Sciatic nerve (tissue), 2 donors: ENCODE measurements at regions of chr3 and their contacts with region 1.

Region 1: DNA sequence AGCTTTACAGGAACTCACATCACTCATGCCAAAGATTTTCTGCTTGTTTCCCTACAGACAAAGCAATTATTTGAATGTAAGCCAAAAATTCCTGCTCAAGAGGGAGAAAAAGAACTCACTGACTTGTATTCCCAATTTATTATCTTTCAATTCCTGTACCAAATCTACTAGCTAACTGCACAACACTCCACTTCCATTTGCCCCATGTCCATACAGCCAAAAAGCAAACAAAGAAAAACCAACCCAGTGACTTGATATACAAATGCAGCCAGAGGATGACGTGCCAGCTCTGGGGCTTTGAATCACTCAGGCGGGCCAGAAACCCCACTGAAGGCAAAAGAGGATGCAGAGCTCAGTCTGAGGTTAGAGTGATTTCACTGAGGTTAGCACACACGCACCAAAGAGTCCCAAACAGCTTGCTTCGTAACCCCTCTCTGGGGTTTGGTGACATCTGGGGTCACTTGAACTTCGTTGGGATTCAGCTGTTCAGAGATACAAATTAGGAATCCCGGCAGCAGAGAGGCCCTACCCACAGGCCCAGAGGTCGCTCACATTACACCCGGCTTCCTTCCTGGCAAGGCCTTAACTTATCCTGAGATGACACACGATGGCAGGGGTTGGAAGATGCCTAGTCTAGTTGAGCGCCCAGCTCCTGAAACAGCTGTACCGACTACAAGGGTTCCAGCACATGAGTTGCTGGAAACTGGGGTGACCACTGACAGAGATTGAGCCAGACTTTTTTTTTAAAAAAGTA is 1.6 kb downstream of the RFTN1 start:
- DNase-seq: peak; percentile 76
- ATAC-seq: peak; percentile 71

Region 2: GRCh38 chr3:15332405-15333098 is 1179.3 kb before region 1 on chr3 and contains the start of gene SH3BP5:
- intact Hi-C with region 1: no loop called
- DNase-seq: peak; percentile 90
- ATAC-seq: peak; percentile 79
- total RNA-seq, gene SH3BP5: 143 TPM

Region 3: DNA sequence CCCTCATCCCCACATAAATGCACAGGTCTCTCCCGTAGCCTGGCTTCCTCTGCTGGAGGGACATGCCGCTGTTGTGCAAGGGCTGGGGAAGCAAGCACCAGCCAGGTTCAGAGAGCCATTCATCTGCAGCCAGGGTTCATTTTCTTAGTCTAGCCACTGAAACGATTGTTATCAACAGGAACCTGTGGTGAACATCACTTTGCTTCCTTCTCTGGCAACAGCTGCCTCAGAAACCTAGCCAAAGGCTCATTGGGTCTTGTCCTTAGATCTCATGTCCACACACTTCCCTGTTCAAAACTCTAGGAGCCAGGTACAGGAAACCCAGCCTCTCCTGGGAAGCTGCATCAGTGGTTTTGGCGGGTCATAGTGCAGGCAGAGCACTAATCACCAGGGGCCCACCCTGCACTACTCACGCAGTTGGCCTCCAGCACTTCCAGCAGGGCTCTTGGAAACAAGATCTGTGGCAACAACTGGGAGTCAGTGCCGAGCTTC is 199.9 kb before region 1 on chr3:
- intact Hi-C with region 1: loop called (anchors 10 kb)
- DNase-seq: no peak
- ATAC-seq: peak; percentile 85

Region 4: GRCh38 chr3:16382845-16383244 is 129.0 kb before region 1 on chr3:
- intact Hi-C with region 1: loop called (anchors 10 kb)
- DNase-seq: no peak
- ATAC-seq: no peak